ENCODE measurements at regions of chr6 and their contacts with region 1.

Region 1: GRCh38 chr6:49849213-49849907 is 17.0 kb downstream of the CRISP1 start:
- DNase-seq: no peak
- ATAC-seq: peak; percentile 23

Region 2: DNA sequence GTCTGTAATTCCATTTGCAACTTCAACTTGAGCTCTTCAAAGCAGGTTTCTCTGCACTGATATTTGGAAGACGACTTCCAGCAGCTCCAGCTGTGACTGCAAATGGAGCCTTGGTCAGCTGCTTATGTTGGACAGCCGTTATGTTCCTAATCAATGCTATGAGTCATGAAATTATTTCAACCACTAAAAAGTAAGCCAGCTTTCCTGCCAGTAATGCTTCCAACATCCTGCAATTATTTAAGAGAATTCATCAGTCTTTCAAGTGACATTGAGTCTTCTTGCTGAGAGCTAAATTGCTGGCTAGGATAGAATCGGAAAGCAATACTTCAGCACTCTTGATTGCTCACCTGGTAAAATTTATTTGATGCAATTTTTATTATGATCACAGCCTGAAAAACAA is 762.0 kb before region 1 on chr6:
- intact Hi-C with region 1: no loop called
- DNase-seq: no peak
- ATAC-seq: no peak

Region 3: DNA sequence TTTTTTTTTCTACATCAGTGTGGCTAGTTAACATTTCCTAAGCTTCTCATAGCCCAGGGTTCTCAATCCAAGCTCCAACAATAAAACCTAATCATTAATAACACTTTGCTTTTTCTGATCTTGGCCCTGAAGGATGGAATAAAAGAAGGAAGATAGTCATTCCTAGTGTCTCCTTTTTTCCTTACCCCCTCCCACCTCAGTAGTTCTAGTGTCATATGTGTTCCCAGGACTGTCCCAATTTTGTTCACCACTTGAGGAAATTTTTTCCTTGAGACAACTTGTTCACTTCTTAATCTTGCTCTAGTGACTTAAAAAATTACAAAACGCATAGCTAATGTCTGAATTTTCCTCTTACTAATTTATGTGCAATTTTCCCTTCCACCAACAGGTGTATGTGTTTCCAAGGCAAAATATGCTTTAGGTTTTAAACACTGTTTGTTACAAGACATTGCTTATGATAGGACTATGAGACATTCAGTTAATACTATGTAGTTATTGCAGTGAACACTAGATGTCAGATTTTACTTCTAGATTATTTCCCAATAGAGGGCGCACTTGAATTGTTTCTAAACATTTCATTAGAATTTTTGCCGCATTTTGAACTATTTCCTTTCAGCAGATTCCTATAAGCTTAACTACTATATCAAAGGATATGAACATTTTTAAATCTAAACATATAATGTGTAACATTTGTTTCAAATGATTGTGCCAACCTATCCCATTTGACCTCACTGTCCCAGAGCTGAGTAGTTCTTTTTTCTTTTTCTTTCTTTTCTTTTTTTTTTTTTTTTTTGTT is 317.4 kb before region 1 on chr6:
- intact Hi-C with region 1: loop called (anchors 5 kb)
- DNase-seq: no peak
- ATAC-seq: no peak

Region 4: GRCh38 chr6:49625140-49625539 is 224.2 kb before region 1 on chr6:
- intact Hi-C with region 1: loop called (anchors 2 kb)
- DNase-seq: no peak
- ATAC-seq: no peak

Region 5: GRCh38 chr6:50007821-50008220 is 158.5 kb after region 1 on chr6:
- intact Hi-C with region 1: no loop called
- DNase-seq: no peak
- ATAC-seq: no peak

Measured in Right ventricle myocardium inferior (tissue), 1 donor.